Activated T-helper 2 cell treated with anti-CD3 and anti-CD28 coated beads, Interferon-gamma antibody, Interleukin-2, Interleukin-4, amounts not matched to agents 10 μg/mL and 5 μg/mL and 100 μg/mL, durations not matched to agents 14 hours and 24 hours and 36 hours (primary cell): ENCODE measurements at regions of chr15 and their contacts with region 1.

Region 1: GRCh38 chr15:87619161-87619960 is 637.2 kb downstream of the NTRK3 start:
- DNase-seq: no peak
- H3K4me3 Mint-ChIP-seq: no peak overlapping the region
- H3K27ac Mint-ChIP-seq: no peak overlapping the region
- H3K4me1 Mint-ChIP-seq: peaks cover 7% of the 10 kb centered on the region
- H3K27me3 Mint-ChIP-seq: no peaks in the 10 kb centered on the region

Region 2: GRCh38 chr15:87597346-87598052 is 21.9 kb before region 1 on chr15:
- intact Hi-C with region 1: loop called (anchors 1 kb)
- DNase-seq: peak; percentile 48
- H3K4me3 Mint-ChIP-seq: no peak overlapping the region
- H3K27ac Mint-ChIP-seq: peak overlapping the region; percentile 65
- H3K4me1 Mint-ChIP-seq: peaks cover 31% of the 10 kb centered on the region
- H3K27me3 Mint-ChIP-seq: peaks cover 7% of the 10 kb centered on the region

Region 3: DNA sequence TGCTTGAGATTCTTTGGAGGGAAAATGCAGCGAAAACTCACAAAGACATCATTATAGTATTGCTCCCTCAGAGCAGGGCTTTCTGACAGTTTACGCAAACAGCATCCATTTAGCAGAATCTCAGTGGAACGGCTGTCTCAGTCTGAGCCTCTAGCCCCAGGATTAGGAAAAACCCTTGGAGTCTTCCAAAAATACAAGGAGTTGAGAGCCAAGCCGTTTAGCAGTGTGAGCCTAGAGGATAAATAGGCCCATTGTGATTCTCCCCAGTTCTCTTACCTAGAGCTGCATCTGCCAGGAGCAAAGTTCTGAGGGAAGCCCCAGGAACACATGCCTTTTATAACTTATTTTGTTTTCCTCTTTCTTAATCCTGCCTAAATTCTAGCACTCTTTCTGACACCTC is 277.6 kb after region 1 on chr15:
- intact Hi-C with region 1: no loop called
- DNase-seq: no peak
- H3K4me3 Mint-ChIP-seq: no peak overlapping the region
- H3K27ac Mint-ChIP-seq: no peak overlapping the region
- H3K4me1 Mint-ChIP-seq: no peaks in the 10 kb centered on the region
- H3K27me3 Mint-ChIP-seq: no peaks in the 10 kb centered on the region